Activated CD8-positive, alpha-beta memory T cell treated with anti-CD3 and anti-CD28 coated beads, Interleukin-2, amount 10 ng/mL, durations not matched to agents 7 days and 5 days (primary cell): ENCODE measurements at regions of chr1 and their contacts with region 1.

Region 1: DNA sequence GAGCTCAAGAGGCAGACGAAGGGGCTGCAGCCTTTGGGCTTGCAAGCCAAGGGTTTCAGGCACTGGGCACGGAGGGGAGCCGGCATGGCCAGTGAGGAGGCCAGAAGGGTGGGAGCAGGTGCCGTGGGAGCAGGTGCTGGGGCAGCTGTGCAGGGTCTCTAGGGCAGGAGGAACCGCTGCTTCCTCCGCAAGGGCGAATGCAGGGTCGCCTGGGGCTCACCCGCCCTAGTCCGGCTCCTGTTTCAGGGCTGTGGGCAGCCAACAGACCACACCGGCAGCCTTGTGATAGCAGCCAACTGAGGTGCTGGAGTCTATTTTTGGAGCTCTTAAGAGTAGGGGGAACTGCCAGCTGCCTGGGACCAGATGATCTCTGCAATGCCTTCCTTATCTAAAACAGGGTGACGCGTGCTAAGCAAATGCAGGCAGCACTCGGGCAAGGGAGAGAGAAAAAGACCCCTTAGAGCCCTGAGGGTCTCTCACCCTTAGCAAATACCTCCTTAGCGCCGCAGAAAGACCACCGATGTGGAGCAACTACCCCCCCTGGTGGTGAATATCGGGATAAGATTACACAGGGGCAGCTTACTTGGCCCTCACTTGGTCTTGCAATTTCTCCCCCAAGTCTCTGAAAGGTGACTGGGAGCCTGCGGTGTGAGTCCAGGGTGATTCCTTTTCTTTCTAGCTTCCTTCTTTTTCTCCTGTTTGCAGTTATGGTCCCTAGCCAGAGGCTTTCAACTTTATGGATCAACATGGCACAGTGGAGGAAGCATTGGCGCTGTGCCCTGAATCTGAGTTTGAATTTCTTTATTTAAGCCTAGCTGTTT is 20.7 kb upstream of the MAPKAPK2 start:
- DNase-seq: peak; percentile 79
- ATAC-seq: peak; percentile 81
- H3K4me3 Mint-ChIP-seq: no peak overlapping the region
- H3K27ac Mint-ChIP-seq: no peak overlapping the region
- H3K4me1 Mint-ChIP-seq: peaks cover 28% of the 10 kb centered on the region
- H3K27me3 Mint-ChIP-seq: peaks cover 32% of the 10 kb centered on the region

Region 2: GRCh38 chr1:206461602-206462455 is 202.2 kb before region 1 on chr1:
- CTCF ChIA-PET with region 1: interaction called, 17 read pairs
- DNase-seq: peak; percentile 86
- ATAC-seq: peak; percentile 77
- H3K4me3 Mint-ChIP-seq: no peak overlapping the region
- H3K27ac Mint-ChIP-seq: no peak overlapping the region
- H3K4me1 Mint-ChIP-seq: peaks cover 45% of the 10 kb centered on the region
- H3K27me3 Mint-ChIP-seq: no peaks in the 10 kb centered on the region

Region 3: GRCh38 chr1:206507284-206508129 is 156.5 kb before region 1 on chr1 and contains the start of gene RASSF5:
- CTCF ChIA-PET with region 1: interaction called, 20 read pairs
- DNase-seq: peak; percentile 90
- ATAC-seq: peak; percentile 87
- H3K4me3 Mint-ChIP-seq: peak within 1 kb of the TSS; percentile 67
- H3K27ac Mint-ChIP-seq: no peak within 1 kb of the TSS
- H3K4me1 Mint-ChIP-seq: peaks cover 48% of the 10 kb centered on the region
- H3K27me3 Mint-ChIP-seq: peaks cover 26% of the 10 kb centered on the region
- total RNA-seq, gene RASSF5: 184 to 216 TPM

Region 4: GRCh38 chr1:206590025-206590758 is 73.8 kb before region 1 on chr1:
- CTCF ChIA-PET with region 1: interaction called, 23 read pairs
- DNase-seq: peak; percentile 91
- ATAC-seq: peak; percentile 96
- H3K4me3 Mint-ChIP-seq: peak overlapping the region; percentile 35
- H3K27ac Mint-ChIP-seq: peak overlapping the region; percentile 91
- H3K4me1 Mint-ChIP-seq: peaks cover 70% of the 10 kb centered on the region
- H3K27me3 Mint-ChIP-seq: no peaks in the 10 kb centered on the region

Region 5: DNA sequence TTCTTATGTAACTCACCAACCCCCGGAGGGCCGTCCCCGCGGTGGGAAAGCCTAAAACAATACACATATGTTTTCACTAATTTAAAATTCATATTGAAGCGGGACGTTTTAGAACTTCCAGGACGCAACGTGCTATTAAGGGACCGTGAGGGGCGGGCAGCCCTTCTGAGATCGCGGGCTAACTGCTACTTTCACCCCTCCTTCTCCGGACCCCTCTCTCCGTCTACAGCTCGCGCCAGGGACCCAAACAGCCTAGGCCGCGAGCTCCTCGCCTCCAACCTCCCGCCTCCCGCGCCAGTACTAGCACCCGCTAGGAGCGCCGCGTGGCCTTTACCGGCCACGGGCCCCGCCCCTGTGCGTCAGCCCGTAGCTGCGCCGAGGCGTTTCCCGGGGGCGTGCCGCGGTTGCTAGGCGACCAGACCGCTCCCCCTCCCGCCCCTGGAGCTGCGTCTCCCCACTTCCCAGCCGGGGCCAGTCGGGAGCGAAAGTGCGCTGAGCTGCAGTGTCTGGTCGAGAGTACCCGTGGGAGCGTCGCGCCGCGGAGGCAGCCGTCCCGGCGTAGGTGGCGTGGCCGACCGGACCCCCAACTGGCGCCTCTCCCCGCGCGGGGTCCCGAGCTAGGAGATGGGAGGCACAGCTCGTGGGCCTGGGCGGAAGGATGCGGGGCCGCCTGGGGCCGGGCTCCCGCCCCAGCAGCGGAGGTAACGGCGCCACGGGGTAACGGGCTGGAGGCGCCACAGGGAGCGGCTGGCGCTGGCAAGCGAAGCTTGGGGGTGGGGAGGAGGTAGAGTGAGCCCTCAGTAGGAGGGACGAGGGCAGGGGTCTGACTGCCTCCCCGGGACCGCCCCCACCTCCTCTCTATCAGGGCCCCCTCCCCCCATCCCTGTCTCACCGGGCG is 28.7 kb before region 1 on chr1 and contains the start of gene DYRK3:
- CTCF ChIA-PET with region 1: interaction called, 418 read pairs
- DNase-seq: peak; percentile 96
- ATAC-seq: peak; percentile 93
- H3K4me3 Mint-ChIP-seq: peak within 1 kb of the TSS; percentile 76
- H3K27ac Mint-ChIP-seq: peak within 1 kb of the TSS; percentile 91
- H3K4me1 Mint-ChIP-seq: peaks cover 33% of the 10 kb centered on the region
- H3K27me3 Mint-ChIP-seq: peaks cover 19% of the 10 kb centered on the region
- total RNA-seq, gene DYRK3: 9.5 to 12.7 TPM

Region 6: GRCh38 chr1:206716870-206717673 is 53.0 kb after region 1 on chr1:
- CTCF ChIA-PET with region 1: interaction called, 14 read pairs
- DNase-seq: peak; percentile 68
- ATAC-seq: peak; percentile 66
- H3K4me3 Mint-ChIP-seq: peak overlapping the region; percentile 13
- H3K27ac Mint-ChIP-seq: peak overlapping the region; percentile 82
- H3K4me1 Mint-ChIP-seq: peaks cover 85% of the 10 kb centered on the region
- H3K27me3 Mint-ChIP-seq: no peaks in the 10 kb centered on the region

Region 7: DNA sequence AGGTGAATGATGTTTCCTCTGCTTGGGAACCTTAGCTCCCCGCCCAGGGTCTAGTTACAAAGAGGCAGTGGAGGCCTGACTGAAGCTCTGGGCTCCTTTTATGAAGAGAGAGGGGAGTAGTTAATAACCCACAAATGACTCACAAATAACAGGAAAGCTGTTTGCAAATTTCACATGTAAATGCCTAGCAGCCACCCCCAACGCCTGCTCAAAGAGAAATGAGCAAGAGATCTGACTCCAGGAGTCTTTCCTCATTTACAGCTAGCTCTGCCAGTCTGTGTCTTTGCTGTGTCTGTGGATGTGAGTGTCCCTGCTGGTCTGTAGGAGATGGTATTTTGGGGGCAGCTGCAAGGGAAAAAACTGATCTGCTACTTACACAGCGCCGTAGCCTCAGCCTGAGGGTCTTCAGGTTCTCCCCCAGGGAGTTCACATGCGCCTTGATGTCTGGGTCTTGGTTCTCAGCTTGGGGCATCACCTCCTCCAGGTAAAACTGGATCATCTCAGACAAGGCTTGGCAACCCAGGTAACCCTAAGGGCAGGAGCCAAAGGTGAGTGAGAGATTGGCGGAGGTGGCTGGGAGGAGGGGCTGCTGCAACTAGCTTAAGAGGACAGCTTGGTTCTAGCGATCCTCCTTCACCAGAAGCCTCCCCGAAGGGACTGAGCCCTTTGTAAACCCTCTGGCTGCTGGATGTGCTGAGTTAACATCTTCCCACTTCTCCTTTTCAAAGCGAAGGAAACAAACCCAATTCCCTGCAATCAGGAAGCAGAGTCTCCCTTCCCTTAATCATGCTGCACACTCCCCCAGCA is 106.7 kb after region 1 on chr1 and contains the start of gene IL19:
- CTCF ChIA-PET with region 1: no interaction called
- DNase-seq: no peak
- ATAC-seq: no peak
- H3K4me3 Mint-ChIP-seq: peak within 1 kb of the TSS; percentile 47
- H3K27ac Mint-ChIP-seq: peak within 1 kb of the TSS; percentile 76
- H3K4me1 Mint-ChIP-seq: peaks cover 81% of the 10 kb centered on the region
- H3K27me3 Mint-ChIP-seq: peaks cover 49% of the 10 kb centered on the region
- total RNA-seq, gene IL19: not detected